B cell (primary cell): ENCODE measurements at regions of chr12 and their contacts with region 1.

Region 1: DNA sequence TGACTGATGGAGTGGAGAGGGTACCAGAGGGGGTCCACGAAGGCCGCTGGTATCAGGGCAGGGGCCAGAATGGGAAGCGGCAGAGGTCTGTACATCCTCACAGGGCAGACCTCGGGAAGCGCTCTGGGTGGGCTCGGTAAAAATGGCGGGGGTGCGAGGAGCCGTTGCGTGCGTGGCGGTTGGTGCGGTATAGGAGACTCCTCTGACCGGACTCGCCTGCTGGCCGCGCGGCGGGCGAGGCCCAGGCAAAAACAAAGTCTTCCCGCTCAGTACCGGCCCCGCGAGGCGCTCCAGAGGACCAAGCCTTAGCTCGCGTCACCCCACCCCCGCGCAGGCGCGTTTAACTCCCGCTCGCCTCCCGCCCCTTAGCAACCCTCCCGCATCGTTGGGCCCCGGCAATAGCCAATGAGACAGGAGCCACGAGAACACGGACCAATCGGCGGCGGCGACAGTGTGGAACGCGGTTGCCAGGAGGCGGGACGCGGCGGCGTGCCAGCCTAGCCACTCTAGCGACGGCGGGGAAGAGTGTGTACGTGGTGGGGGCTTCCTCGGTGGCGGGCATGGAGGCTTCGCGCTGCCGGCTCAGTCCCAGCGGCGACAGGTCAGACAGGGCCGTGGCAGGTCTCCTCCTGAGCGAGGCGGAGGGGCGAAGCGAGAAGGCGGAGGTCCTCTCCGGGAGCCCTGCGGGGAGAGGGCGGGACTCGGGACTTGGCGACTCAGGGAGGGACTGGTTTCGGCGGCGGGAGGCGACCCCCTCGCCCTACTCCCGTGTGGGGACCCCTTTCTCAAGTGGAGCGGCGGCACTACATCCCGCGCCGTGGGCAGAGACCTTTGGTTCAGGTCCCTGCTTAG is at the start of gene TULP3:
- DNase-seq: peak; percentile 98
- ATAC-seq: peak; percentile 98
- H3K4me3 ChIP-seq: peak within 1 kb of the TSS; percentile 65 to 99 (median 85)
- H3K4me3 Mint-ChIP-seq: peak within 1 kb of the TSS; percentile 94
- H3K27ac ChIP-seq: peak within 1 kb of the TSS; percentile 60 to 89
- H3K27ac Mint-ChIP-seq: peak within 1 kb of the TSS; percentile 93
- H3K4me1 ChIP-seq: peaks cover 5 to 12% of the 10 kb centered on the region in 2 donors
- H3K4me1 Mint-ChIP-seq: peaks cover 26% of the 10 kb centered on the region
- H3K27me3 ChIP-seq: no peaks in the 10 kb centered on the region
- H3K27me3 Mint-ChIP-seq: no peaks in the 10 kb centered on the region
- CTCF ChIP-seq: no peak
- total RNA-seq, gene TULP3: 8.1 and 8.3 TPM in 2 replicates

Region 2: DNA sequence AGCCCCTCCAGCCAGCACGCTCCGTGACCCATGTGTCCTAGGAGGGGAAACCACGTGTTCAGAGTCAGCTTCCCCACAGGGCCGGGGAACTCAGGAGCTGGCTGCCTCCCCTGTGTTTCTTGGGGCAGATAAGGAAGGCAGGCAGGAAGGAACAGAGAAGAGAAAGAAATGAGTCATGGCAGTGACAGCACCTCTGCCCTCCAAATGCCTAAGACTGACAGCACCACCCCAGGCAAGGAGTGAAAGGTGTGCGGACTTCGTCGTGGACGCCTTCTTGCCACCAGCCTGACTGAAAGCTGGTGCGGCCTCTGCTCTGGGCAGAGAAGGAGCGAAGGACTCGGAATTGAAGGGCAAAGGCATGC is 262.8 kb before region 1 on chr12:
- CTCF ChIA-PET with region 1: no interaction called
- POLR2A ChIA-PET with region 1: no interaction called
- intact Hi-C with region 1: no loop called
- DNase-seq: no peak
- ATAC-seq: no peak
- H3K4me3 ChIP-seq: no peak overlapping the region
- H3K4me3 Mint-ChIP-seq: no peak overlapping the region
- H3K27ac ChIP-seq: no peak overlapping the region
- H3K27ac Mint-ChIP-seq: no peak overlapping the region
- H3K4me1 ChIP-seq: no peaks in the 10 kb centered on the region
- H3K4me1 Mint-ChIP-seq: peaks cover 4% of the 10 kb centered on the region
- H3K27me3 ChIP-seq: peaks cover 0 to 15% (median 0%) of the 10 kb centered on the region in 4 experiments
- H3K27me3 Mint-ChIP-seq: peaks cover 50% of the 10 kb centered on the region
- CTCF ChIP-seq: no peak

Region 3: DNA sequence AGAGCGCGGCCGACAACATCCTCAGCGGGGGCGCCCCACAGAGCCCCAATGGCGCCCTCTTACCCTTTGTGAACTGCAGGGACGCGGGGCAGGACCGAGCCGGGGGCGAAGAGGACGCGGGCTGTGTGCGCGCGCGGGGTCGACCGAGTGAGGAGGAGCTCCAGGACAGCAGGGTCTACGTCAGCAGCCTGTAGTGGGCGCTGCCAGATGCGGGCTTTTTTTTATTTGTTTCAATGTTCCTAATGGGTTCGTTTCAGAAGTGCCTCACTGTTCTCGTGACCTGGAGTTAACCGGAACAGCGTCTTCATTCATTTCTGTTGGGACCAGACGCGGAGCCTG is 199.6 kb before region 1 on chr12:
- CTCF ChIA-PET with region 1: no interaction called
- POLR2A ChIA-PET with region 1: interaction called, 9 read pairs
- intact Hi-C with region 1: loop called (anchors 5 kb)
- DNase-seq: peak; percentile 66
- ATAC-seq: peak; percentile 75
- H3K4me3 ChIP-seq: peak overlapping the region; percentile 42 to 78 (median 72)
- H3K4me3 Mint-ChIP-seq: peak overlapping the region; percentile 93
- H3K27ac ChIP-seq: peak overlapping the region in 1 of 2 donors; percentile 66
- H3K27ac Mint-ChIP-seq: peak overlapping the region; percentile 76
- H3K4me1 ChIP-seq: peaks cover 10 to 16% of the 10 kb centered on the region in 2 donors
- H3K4me1 Mint-ChIP-seq: peaks cover 29% of the 10 kb centered on the region
- H3K27me3 ChIP-seq: peaks cover 0 to 5% (median 2%) of the 10 kb centered on the region in 4 experiments
- H3K27me3 Mint-ChIP-seq: peaks cover 26% of the 10 kb centered on the region
- CTCF ChIP-seq: no peak

Region 4: DNA sequence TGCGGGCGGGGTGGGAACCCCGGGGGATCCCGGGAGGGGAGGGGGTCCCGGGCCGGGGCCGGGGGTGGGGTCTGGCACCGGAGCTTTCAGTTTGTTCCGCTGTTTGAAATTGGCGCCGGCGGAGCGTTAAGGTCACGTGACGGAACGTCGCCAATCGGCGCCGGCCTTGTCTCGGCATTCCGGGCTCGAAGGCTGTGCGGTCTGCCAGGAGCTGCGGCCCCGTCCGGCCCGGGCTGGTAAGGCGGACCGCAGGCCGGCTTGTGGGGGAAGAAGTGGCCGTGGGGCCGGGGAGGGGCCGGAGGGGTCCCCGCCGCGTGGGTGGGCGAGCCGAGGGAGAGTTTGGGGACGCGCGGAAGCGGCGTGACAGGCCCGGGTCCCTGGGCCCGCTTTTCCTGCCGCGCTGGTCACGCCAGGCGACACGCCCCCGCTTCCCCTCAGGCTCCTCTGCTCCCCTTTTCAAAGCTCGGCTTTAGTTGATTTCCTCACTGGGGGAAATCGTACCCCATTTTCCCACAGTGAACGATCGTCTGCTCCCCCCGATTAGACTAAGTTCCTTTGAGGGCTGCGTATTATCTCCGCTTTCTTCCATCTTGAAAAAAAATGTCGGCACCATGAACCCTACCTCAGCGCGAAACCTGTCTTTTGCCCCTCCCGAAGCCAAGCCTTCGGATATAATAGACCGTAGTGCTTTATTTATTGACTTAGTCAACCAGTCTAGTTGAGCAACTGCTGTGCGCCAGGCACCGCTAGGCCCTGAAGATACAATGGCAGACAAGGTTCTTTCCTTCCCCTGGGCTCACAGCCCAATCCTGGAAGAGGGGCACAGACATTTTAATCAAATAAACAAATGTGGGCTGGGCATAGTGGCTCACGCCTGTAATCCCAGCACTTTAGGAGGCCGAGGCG is 13.3 kb before region 1 on chr12 and contains the starts of genes FOXM1 and RHNO1:
- CTCF ChIA-PET with region 1: interaction called, 3 read pairs
- POLR2A ChIA-PET with region 1: interaction called, 7 read pairs
- intact Hi-C with region 1: loop called (anchors 1 kb)
- DNase-seq: peak; percentile 90
- ATAC-seq: peak; percentile 79
- H3K4me3 ChIP-seq: peak within 1 kb of the TSS; percentile 81 to 98 (median 88)
- H3K4me3 Mint-ChIP-seq: peak within 1 kb of the TSS; percentile 97
- H3K27ac ChIP-seq: peak within 1 kb of the TSS; percentile 90 to 91
- H3K27ac Mint-ChIP-seq: peak within 1 kb of the TSS; percentile 96
- H3K4me1 ChIP-seq: peaks cover 17 to 23% of the 10 kb centered on the region in 2 donors
- H3K4me1 Mint-ChIP-seq: peaks cover 30% of the 10 kb centered on the region
- H3K27me3 ChIP-seq: no peaks in the 10 kb centered on the region
- H3K27me3 Mint-ChIP-seq: no peaks in the 10 kb centered on the region
- CTCF ChIP-seq: no peak
- total RNA-seq, gene FOXM1: 0.51 and 0.84 TPM in 2 replicates
- total RNA-seq, gene RHNO1: 13.5 and 15.0 TPM in 2 replicates

Region 5: DNA sequence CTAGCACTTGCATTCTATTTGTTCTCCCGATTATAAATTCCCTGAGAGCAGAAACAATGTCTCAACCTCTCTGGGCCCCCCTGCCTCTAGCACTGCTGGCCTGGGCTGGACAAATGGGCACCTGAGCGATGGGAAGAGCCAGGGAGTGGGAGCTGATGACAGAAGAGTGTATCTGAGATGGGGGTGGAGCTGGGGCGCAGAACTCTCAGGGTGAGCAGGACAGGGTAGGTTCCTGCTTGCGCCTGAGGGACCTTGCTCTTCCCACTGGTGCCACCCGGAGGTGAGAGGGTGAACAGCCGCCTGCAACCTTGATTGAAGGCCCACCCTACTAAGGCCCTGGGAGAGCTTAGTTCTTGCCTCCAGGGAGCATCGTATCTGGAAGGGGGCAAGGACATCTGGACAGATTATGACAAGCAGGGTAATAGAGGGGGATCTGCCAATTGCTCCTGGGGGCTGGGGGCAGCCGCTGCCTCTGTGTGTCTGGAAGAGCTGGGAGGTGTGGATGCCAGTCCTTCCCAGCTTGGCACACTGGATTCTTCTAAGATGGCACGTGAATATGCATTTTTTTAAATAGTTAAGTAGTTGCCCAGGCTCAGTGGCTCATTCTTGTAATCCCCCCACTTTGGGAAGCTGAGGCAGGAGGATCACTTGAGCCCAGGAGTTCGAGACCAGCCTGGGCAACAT is 143.6 kb after region 1 on chr12:
- CTCF ChIA-PET with region 1: no interaction called
- POLR2A ChIA-PET with region 1: interaction called, 17 read pairs
- intact Hi-C with region 1: no loop called
- DNase-seq: peak; percentile 39
- ATAC-seq: peak; percentile 57
- H3K4me3 ChIP-seq: no peak overlapping the region
- H3K4me3 Mint-ChIP-seq: no peak overlapping the region
- H3K27ac ChIP-seq: no peak overlapping the region
- H3K27ac Mint-ChIP-seq: no peak overlapping the region
- H3K4me1 ChIP-seq: no peaks in the 10 kb centered on the region
- H3K4me1 Mint-ChIP-seq: no peaks in the 10 kb centered on the region
- H3K27me3 ChIP-seq: no peaks in the 10 kb centered on the region
- H3K27me3 Mint-ChIP-seq: peaks cover 12% of the 10 kb centered on the region
- CTCF ChIP-seq: peak; percentile 34

Region 6: DNA sequence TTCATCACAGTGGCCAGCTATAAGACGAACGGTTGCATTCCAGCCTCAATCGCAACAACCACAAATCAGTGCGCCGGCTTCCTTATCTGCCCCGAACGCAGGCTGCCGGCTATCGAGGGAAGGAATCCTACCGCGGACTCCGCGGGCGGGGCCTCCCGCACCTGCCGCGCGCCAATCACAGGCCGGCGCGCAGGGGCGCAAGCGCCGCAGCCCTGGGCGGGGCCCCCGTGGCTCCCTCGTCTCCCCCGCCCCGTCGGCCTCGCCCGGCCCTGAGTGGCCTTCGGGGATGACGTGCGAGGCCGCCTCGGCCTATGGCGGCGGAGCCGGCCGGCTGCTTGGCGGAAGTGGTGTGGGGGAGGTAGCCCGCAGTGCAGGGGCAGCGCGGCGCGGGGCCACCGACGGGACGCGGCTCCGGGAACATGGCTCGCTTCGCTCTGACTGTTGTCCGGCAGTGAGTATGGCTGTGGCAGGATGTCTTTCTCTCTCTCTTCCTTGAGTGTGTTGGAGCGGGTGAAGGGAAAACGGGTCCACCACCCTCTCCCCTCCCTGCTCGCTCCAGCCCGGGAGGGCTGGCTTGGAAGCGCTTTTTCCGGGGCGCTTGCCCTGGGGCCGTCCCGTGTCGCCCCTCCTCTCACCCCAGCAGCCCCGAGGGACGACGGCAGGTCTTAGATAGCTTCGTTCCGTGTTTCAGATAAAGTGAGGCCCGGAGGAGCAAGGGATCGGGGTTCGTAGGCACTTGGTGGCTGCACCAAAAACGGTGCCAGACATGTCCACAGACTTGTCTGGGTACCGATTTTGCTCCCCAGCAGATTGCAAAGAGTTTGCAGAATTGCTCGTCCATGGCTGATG is 1430.5 kb after region 1 on chr12 and contains the start of gene TIGAR:
- CTCF ChIA-PET with region 1: no interaction called
- POLR2A ChIA-PET with region 1: no interaction called
- intact Hi-C with region 1: loop called (anchors 5 kb)
- DNase-seq: peak; percentile 95
- ATAC-seq: peak; percentile 97
- H3K4me3 ChIP-seq: peak within 1 kb of the TSS; percentile 69 to 98 (median 90)
- H3K4me3 Mint-ChIP-seq: peak within 1 kb of the TSS; percentile 94
- H3K27ac ChIP-seq: peak within 1 kb of the TSS; percentile 90 to 91
- H3K27ac Mint-ChIP-seq: peak within 1 kb of the TSS; percentile 88
- H3K4me1 ChIP-seq: peaks cover 26 to 30% of the 10 kb centered on the region in 2 donors
- H3K4me1 Mint-ChIP-seq: peaks cover 32% of the 10 kb centered on the region
- H3K27me3 ChIP-seq: no peaks in the 10 kb centered on the region
- H3K27me3 Mint-ChIP-seq: no peaks in the 10 kb centered on the region
- CTCF ChIP-seq: no peak
- total RNA-seq, gene TIGAR: 6.6 and 14.2 TPM in 2 replicates